H1 (cell line): ENCODE measurements at regions of chr5 and their contacts with region 1.

Region 1: GRCh38 chr5:32585446-32586275 is at the start of gene SUB1:
- DNase-seq: peak; percentile 75 to 93
- H3K4me3 ChIP-seq: peak within 1 kb of the TSS; percentile 68 to 96 (median 88)
- H3K27ac ChIP-seq: peak within 1 kb of the TSS; percentile 81
- H3K4me1 ChIP-seq: peaks cover 3 to 16% (median 9%) of the 10 kb centered on the region in 4 experiments
- H3K27me3 ChIP-seq: no peaks in the 10 kb centered on the region
- CTCF ChIP-seq: peak in 1 of 3 experiments; percentile 4; a peak in 1 of 4 replicates
- EP300 ChIP-seq: no peak
- POLR2A ChIP-seq: peak; percentile 42 to 91
- RAD21 ChIP-seq: no peak
- total RNA-seq, gene SUB1: 319 and 325 TPM in 2 replicates

Region 2: DNA sequence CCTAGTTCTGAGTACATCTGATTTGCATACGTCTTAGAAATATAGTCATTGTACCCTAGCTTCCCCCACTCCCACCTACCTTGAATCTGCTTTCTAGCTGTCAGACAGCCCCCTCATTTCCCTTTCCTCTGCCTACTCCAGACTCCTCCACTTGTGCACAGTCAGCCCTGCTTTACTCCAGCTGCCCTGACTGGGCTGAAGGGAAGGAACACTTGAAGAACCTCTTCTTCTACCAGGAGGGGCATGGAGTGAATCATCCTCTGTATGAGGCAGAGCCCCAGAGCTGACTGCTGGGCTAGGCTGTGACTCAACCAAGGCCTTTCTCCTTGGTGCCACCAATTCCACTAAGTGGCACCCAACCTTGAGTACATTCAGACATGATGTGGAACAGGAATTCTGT is 123.0 kb before region 1 on chr5:
- CTCF ChIA-PET with region 1: interaction called, 11 read pairs
- POLR2A ChIA-PET with region 1: no interaction called
- DNase-seq: no peak
- H3K4me3 ChIP-seq: no peak overlapping the region
- H3K27ac ChIP-seq: no peak overlapping the region
- H3K4me1 ChIP-seq: no peaks in the 10 kb centered on the region
- H3K27me3 ChIP-seq: no peaks in the 10 kb centered on the region
- CTCF ChIP-seq: no peak
- EP300 ChIP-seq: no peak
- POLR2A ChIP-seq: no peak
- RAD21 ChIP-seq: no peak

Region 3: DNA sequence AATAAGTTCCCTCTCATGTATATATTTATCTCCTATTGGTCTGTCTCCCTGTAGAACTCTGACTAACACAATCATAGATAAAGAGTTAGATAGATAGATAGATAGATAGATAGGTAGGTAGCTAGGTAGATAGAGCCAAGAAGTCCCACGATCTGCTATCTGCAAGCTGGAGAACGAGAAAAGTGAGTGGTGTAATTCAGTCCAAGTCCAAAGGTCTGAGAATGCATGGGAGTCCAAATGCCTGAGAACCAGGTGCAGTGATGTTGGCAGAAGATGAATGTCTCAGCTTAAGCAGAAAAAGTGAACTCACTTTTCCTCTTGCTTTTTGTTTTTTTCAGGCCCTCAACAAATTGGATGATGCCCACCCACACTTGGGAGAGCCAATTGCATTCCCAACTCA is 103.5 kb before region 1 on chr5:
- CTCF ChIA-PET with region 1: interaction called, 158 read pairs
- POLR2A ChIA-PET with region 1: interaction called, 6 read pairs
- DNase-seq: no peak
- H3K4me3 ChIP-seq: no peak overlapping the region
- H3K27ac ChIP-seq: no peak overlapping the region
- H3K4me1 ChIP-seq: no peaks in the 10 kb centered on the region
- H3K27me3 ChIP-seq: no peaks in the 10 kb centered on the region
- CTCF ChIP-seq: no peak
- EP300 ChIP-seq: no peak
- POLR2A ChIP-seq: no peak
- RAD21 ChIP-seq: no peak

Region 4: DNA sequence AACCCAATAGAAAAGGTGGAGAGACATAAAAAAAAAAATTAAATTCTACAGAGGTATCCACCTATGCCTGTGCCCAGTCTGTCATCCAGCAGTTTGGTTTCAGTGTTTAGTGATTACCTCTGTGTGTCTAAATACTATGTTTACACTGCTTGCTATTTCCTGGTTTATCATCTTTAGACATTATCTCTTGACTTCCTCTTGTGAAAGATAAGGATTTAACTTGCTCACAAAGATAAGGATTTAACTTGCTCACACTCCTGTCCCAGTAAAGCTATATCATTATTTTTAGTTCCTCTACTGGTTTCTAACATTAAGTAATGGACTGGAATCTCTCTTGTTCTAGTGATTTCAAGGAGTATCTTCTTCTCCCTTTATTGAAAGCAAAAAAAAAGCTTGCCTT is 87.2 kb before region 1 on chr5:
- CTCF ChIA-PET with region 1: interaction called, 15 read pairs
- POLR2A ChIA-PET with region 1: interaction called, 6 read pairs
- DNase-seq: no peak
- H3K4me3 ChIP-seq: no peak overlapping the region
- H3K27ac ChIP-seq: no peak overlapping the region
- H3K4me1 ChIP-seq: peaks cover 7 to 12% (median 10%) of the 10 kb centered on the region in 4 experiments; a peak in 6 of 7 replicates
- H3K27me3 ChIP-seq: peaks cover 0 to 18% (median 12%) of the 10 kb centered on the region in 4 experiments; a peak in 4 of 7 replicates
- CTCF ChIP-seq: no peak
- EP300 ChIP-seq: no peak
- POLR2A ChIP-seq: no peak
- RAD21 ChIP-seq: no peak

Region 5: GRCh38 chr5:32522429-32523143 is 63.1 kb before region 1 on chr5:
- CTCF ChIA-PET with region 1: interaction called, 35 read pairs
- POLR2A ChIA-PET with region 1: interaction called, 8 read pairs
- DNase-seq: no peak
- H3K4me3 ChIP-seq: no peak overlapping the region
- H3K27ac ChIP-seq: no peak overlapping the region
- H3K4me1 ChIP-seq: no peaks in the 10 kb centered on the region
- H3K27me3 ChIP-seq: no peaks in the 10 kb centered on the region
- CTCF ChIP-seq: no peak
- EP300 ChIP-seq: no peak
- POLR2A ChIP-seq: no peak
- RAD21 ChIP-seq: no peak

Region 6: GRCh38 chr5:32654427-32654826 is 68.8 kb after region 1 on chr5:
- CTCF ChIA-PET with region 1: no interaction called
- POLR2A ChIA-PET with region 1: no interaction called
- DNase-seq: no peak
- H3K4me3 ChIP-seq: no peak overlapping the region
- H3K27ac ChIP-seq: no peak overlapping the region
- H3K4me1 ChIP-seq: no peaks in the 10 kb centered on the region
- H3K27me3 ChIP-seq: no peaks in the 10 kb centered on the region
- CTCF ChIP-seq: no peak
- EP300 ChIP-seq: no peak
- POLR2A ChIP-seq: no peak
- RAD21 ChIP-seq: no peak